ENCODE measurements at regions of chr11 and their contacts with region 1.

Region 1: DNA sequence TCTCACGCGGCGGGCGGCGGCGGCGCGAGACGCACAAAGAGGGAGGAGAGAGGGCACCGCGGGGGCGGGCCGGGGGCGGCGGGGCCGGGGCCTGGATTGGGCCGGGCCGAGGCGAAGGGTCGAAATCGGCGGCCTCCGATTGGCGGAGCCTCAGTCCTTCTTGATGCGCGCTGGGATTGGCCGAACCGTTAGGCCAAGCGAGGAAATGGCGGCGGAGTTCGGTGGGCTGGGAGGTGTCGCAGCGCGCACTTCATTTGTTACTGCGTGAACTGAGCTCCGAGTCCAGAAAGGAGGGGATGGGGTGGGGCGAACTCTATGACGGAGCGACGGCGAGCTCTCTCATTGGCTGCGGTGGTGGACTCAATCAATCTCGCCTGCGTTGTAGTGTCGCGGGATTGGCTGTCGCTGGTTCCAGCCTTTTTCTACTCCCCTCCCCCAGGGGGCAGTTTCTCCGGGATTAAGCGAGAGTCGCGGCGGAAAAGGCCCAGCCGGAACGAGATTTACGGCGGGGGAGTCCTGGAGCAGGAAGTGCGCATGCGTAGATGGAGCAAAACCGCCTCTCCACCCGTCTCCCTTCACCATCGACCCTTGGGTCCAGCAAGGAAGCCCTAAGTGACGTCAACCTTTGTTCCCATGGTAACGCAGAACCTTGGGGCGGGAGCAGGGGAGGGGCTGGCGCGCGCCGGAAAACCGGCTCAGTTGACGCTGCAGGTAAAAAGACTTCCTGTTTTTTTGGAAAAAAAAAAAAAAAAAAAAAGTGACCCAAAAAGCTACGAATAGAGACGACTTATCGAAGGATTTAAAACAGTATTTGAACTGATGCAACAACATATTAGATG is at the start of gene SF1:
- DNase-seq: peak; percentile 99
- ATAC-seq: peak; percentile 91
- H3K4me3 Mint-ChIP-seq: peak within 1 kb of the TSS; percentile 97
- H3K27ac Mint-ChIP-seq: peak within 1 kb of the TSS; percentile 99
- H3K4me1 Mint-ChIP-seq: peaks cover 57% of the 10 kb centered on the region
- H3K27me3 Mint-ChIP-seq: no peaks in the 10 kb centered on the region
- total RNA-seq, gene SF1: 318 to 362 TPM

Region 2: GRCh38 chr11:64317957-64318693 is 460.6 kb before region 1 on chr11 and contains the start of gene PRDX5:
- CTCF ChIA-PET with region 1: no interaction called
- POLR2A ChIA-PET with region 1: interaction called, 7 read pairs
- intact Hi-C with region 1: loop called in 1 of 2 experiments (anchors 1 kb)
- DNase-seq: peak; percentile 97
- ATAC-seq: peak; percentile 84
- H3K4me3 Mint-ChIP-seq: peak within 1 kb of the TSS; percentile 97
- H3K27ac Mint-ChIP-seq: peak within 1 kb of the TSS; percentile 99
- H3K4me1 Mint-ChIP-seq: peaks cover 26% of the 10 kb centered on the region
- H3K27me3 Mint-ChIP-seq: no peaks in the 10 kb centered on the region
- total RNA-seq, gene PRDX5: 110 to 142 TPM

Region 3: GRCh38 chr11:64803163-64803845 is 24.6 kb after region 1 on chr11 and contains the start of gene MAP4K2:
- CTCF ChIA-PET with region 1: interaction called, 3 read pairs
- POLR2A ChIA-PET with region 1: interaction called, 7 read pairs
- intact Hi-C with region 1: loop called (anchors 1 to 2 kb)
- DNase-seq: peak; percentile 92
- ATAC-seq: peak; percentile 93
- H3K4me3 Mint-ChIP-seq: peak within 1 kb of the TSS; percentile 75
- H3K27ac Mint-ChIP-seq: peak within 1 kb of the TSS; percentile 90
- H3K4me1 Mint-ChIP-seq: peaks cover 27% of the 10 kb centered on the region
- H3K27me3 Mint-ChIP-seq: no peaks in the 10 kb centered on the region
- total RNA-seq, gene MAP4K2: 54.0 to 57.3 TPM

Region 4: GRCh38 chr11:64916775-64917662 is 138.3 kb after region 1 on chr11 and contains the start of gene ATG2A:
- CTCF ChIA-PET with region 1: no interaction called
- POLR2A ChIA-PET with region 1: no interaction called
- intact Hi-C with region 1: loop called in 1 of 2 experiments (anchors 1 kb)
- DNase-seq: peak; percentile 99
- ATAC-seq: peak; percentile 99
- H3K4me3 Mint-ChIP-seq: peak within 1 kb of the TSS; percentile 90
- H3K27ac Mint-ChIP-seq: peak within 1 kb of the TSS; percentile 88
- H3K4me1 Mint-ChIP-seq: peaks cover 16% of the 10 kb centered on the region
- H3K27me3 Mint-ChIP-seq: no peaks in the 10 kb centered on the region
- total RNA-seq, gene ATG2A: 15.8 to 16.7 TPM

Region 5: DNA sequence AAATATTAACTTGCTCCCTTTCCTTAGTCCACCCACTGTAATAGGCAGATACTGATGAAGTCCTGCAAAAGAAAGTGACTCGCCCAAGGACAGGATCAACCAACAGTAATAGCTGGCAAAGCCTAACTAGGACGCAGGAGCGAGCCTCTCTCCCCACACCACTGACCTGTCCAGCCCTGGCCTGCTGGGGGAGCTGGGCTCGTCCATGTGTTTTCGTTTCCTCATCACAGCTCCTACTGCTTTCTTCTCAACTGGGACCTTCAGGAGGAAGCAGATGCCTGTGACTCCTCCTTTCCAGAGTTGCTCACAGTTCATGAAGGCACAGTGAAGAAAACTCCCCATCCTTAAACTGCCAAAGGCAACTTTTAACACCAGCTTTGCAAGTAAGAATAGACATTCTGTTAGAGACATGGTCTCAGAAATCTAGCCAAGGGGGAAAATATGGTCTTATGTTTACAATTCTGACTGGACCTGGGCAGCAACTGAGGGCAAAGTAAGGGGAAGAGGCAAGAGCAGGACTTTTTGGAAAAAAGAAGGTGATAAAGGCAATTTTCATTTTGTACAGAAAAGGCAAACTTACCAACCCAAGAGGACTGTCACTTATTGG is 168.6 kb after region 1 on chr11:
- CTCF ChIA-PET with region 1: no interaction called
- POLR2A ChIA-PET with region 1: no interaction called
- intact Hi-C with region 1: no loop called
- DNase-seq: no peak
- ATAC-seq: no peak
- H3K4me3 Mint-ChIP-seq: no peak overlapping the region
- H3K27ac Mint-ChIP-seq: no peak overlapping the region
- H3K4me1 Mint-ChIP-seq: no peaks in the 10 kb centered on the region
- H3K27me3 Mint-ChIP-seq: peaks cover 3% of the 10 kb centered on the region

Region 6: GRCh38 chr11:65117216-65118096 is 338.7 kb after region 1 on chr11 and contains the start of gene ZNHIT2:
- CTCF ChIA-PET with region 1: interaction called, 3 read pairs
- POLR2A ChIA-PET with region 1: interaction called, 3 read pairs
- intact Hi-C with region 1: loop called (anchors 1 to 10 kb)
- DNase-seq: peak; percentile 100
- ATAC-seq: peak; percentile 68
- H3K4me3 Mint-ChIP-seq: peak within 1 kb of the TSS; percentile 88
- H3K27ac Mint-ChIP-seq: peak within 1 kb of the TSS; percentile 95
- H3K4me1 Mint-ChIP-seq: peaks cover 57% of the 10 kb centered on the region
- H3K27me3 Mint-ChIP-seq: no peaks in the 10 kb centered on the region
- total RNA-seq, gene ZNHIT2: 7.1 to 9.7 TPM

Region 7: DNA sequence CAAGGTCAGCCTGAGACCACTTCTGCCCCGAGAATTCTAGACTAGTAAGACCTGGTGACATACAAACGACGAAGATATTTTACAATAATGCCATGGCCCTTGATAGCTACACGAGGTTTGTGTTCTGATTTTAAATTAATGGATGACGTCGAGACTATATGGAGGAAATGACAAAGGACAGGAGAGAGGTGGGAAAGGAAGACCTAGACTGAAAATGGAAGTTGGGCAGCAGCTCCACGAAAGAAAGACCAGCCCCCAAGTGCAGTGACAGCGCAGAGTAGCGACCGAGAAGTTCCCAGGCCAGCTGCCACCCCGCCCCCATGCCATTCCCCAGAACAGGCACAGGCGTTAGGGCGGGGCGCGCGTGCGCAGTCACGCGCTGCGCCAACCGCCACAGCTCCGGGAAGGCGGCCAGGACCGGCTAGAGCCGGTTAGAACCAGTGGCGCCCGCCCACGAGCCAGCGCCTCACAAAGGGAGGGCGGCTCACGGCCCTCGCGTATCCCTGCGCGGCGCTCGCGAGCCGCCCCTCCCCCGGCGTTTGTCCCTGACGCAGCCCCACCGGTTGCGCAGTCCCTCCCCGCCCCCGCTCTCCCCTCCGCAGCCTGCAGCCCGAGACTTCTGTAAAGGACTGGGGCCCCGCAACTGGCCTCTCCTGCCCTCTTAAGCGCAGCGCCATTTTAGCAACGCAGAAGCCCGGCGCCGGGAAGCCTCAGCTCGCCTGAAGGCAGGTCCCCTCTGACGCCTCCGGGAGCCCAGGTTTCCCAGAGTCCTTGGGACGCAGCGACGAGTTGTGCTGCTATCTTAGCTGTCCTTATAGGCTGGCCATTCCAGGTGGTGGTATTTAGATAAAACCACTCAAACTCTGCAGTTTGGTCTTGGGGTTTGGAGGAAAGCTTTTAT is 718.7 kb after region 1 on chr11:
- CTCF ChIA-PET with region 1: no interaction called
- POLR2A ChIA-PET with region 1: interaction called, 4 read pairs
- intact Hi-C with region 1: loop called in 1 of 2 experiments (anchors 2 kb)
- DNase-seq: peak; percentile 100
- ATAC-seq: peak; percentile 70
- H3K4me3 Mint-ChIP-seq: no peak overlapping the region
- H3K27ac Mint-ChIP-seq: peak overlapping the region; percentile 96
- H3K4me1 Mint-ChIP-seq: peaks cover 41% of the 10 kb centered on the region
- H3K27me3 Mint-ChIP-seq: no peaks in the 10 kb centered on the region